MCF 10A (cell line): ENCODE measurements at regions of chr2 and their contacts with region 1.

Region 1: DNA sequence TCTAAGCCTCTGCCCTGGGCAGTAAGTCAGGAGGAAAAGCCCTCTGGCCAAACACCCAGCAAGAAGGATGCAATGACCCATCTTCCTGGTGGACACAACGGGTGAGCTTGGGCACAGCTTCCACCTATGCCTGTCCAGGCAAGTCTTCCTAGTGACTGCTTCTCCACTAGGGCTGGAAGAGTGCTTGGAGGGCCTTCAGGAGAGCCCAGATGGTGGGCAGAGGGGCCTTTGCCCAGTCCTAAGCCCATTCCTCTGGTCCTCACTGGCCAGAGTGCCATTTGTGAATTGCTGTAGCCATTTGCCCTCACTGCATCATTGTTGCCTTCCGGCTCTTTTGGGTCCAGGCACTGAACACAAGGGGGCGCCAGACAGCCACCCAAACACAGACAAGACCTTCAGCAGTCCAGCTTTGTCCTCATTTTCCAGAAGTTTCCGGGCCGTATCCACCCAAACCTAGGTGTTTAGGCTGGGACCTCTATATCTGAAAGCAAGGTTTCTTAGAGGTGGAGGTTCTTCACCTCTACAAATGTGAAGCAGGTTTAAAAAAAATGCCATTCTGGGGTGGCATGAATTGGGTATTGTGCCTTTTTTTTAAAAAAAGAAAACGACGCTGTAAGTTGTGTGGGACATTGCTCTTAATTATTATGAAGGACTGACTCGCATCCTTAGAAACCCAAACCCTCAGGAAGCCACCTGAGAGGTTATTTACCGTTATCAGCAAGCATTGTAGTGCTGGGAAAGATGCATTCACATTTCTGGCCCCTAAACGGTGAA is 29.5 kb downstream of the PAX8 start:
- DNase-seq: peak; percentile 86
- H3K4me3 Mint-ChIP-seq: no peak overlapping the region
- H3K27ac Mint-ChIP-seq: no peak overlapping the region
- H3K4me1 Mint-ChIP-seq: peaks cover 15% of the 10 kb centered on the region
- H3K27me3 Mint-ChIP-seq: no peaks in the 10 kb centered on the region
- CTCF ChIP-seq: peak; percentile 92

Region 2: DNA sequence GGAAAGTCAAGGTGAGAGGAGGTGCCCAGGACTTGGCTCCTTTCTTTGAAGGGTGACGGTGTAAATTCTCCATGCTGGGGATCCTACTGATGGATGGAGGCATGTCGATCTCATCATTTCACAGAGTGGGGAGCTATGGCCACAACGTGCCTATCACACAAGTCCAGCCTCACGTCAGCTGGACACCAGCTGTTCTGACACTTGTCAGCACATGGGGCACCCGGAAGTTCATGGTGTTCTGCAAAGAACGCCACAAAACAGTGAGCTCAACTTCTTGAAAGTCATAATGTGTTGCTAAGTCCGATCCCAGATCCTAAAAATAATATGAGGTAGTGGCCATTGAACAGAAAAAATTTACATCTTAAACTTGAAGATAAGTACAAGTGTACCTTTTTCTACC is 17.2 kb after region 1 on chr2:
- CTCF ChIA-PET with region 1: interaction called, 34 read pairs
- POLR2A ChIA-PET with region 1: no interaction called
- intact Hi-C with region 1: no loop called
- DNase-seq: no peak
- H3K4me3 Mint-ChIP-seq: no peak overlapping the region
- H3K27ac Mint-ChIP-seq: no peak overlapping the region
- H3K4me1 Mint-ChIP-seq: no peaks in the 10 kb centered on the region
- H3K27me3 Mint-ChIP-seq: no peaks in the 10 kb centered on the region
- CTCF ChIP-seq: no peak

Region 3: GRCh38 chr2:113282747-113283533 is 33.8 kb after region 1 on chr2:
- CTCF ChIA-PET with region 1: interaction called, 7 read pairs
- POLR2A ChIA-PET with region 1: interaction called, 3 read pairs
- intact Hi-C with region 1: loop called (anchors 2 kb)
- DNase-seq: peak; percentile 78
- H3K4me3 Mint-ChIP-seq: peak overlapping the region; percentile 33
- H3K27ac Mint-ChIP-seq: peak overlapping the region; percentile 84
- H3K4me1 Mint-ChIP-seq: peaks cover 42% of the 10 kb centered on the region
- H3K27me3 Mint-ChIP-seq: no peaks in the 10 kb centered on the region
- CTCF ChIP-seq: no peak

Region 4: DNA sequence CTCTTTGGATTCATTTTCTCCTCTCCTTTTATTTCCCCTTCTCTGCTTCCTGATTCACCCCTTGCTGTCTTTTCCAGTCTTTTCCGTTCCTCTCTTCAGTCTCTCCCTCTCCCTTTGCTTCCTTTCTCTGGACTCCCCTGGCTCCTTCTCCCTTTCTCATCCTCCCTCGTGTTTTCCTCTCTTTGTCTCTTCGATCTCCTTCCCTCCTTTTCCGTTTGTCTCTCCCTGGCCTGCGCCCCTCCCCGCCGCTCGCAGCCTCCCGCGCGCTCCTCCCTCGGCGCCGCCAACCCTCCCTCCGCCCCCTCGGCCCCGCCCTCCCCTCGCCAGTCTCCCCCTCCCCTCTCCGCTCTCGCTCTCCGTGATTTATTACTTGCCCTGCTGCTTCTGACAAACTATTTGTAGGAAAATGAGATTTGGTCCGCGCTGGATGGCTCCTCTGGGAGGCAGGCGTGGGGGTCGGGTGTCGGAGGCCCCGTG is 75.5 kb after region 1 on chr2:
- CTCF ChIA-PET with region 1: interaction called, 6 read pairs
- POLR2A ChIA-PET with region 1: no interaction called
- intact Hi-C with region 1: loop called (anchors 2 kb)
- DNase-seq: peak; percentile 71
- H3K4me3 Mint-ChIP-seq: peak overlapping the region; percentile 91
- H3K27ac Mint-ChIP-seq: peak overlapping the region; percentile 21
- H3K4me1 Mint-ChIP-seq: peaks cover 35% of the 10 kb centered on the region
- H3K27me3 Mint-ChIP-seq: no peaks in the 10 kb centered on the region
- CTCF ChIP-seq: no peak

Region 5: GRCh38 chr2:113370478-113371091 is 121.4 kb after region 1 on chr2:
- CTCF ChIA-PET with region 1: interaction called, 143 read pairs
- POLR2A ChIA-PET with region 1: interaction called, 8 read pairs
- intact Hi-C with region 1: loop called (anchors 1 kb)
- DNase-seq: peak; percentile 80
- H3K4me3 Mint-ChIP-seq: no peak overlapping the region
- H3K27ac Mint-ChIP-seq: no peak overlapping the region
- H3K4me1 Mint-ChIP-seq: peaks cover 7% of the 10 kb centered on the region
- H3K27me3 Mint-ChIP-seq: no peaks in the 10 kb centered on the region
- CTCF ChIP-seq: peak; percentile 76